ENCODE measurements at regions of chr15 and their contacts with region 1.

Region 1: DNA sequence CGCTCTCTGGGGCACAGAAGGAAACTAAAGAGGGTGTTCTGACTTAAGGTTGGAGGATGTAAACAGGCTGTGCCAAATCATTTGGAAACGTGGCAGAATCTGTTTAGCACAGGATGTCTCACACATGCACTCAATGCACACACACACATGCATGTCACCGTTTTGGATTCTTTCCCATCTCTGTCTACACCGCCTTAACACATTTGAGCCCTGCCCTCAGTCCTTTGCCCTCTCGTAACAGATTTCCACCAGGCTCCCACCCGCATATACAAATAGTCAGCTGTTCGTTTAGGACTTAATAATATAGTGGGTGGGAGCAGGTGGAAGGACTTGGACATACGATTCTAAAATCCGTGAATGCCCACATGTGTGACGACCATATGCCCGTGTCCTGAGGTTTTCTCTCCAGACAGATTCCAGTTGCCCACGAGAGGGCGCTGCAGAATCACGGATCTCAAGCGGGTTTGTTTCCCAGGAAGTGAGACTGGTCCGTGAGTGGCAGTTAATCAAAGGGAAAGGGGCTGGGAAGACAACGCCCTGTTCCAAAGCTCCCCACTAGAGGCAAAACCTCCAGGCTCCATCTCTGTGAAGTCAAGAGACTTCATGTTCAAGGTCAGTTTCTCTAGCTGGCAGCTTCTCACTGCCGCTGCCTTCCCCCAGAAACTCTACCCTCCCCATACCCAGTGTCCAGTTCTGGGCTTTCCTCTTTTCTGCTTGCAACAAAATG is 44.5 kb downstream of the NOX5 start:
- DNase-seq: peak; percentile 85 to 97 (median 92)
- H3K4me3 ChIP-seq: no peak overlapping the region
- H3K27ac ChIP-seq: no peak overlapping the region
- H3K4me1 ChIP-seq: peaks cover 0 to 8% of the 10 kb centered on the region in 2 donors
- H3K27me3 ChIP-seq: no peaks in the 10 kb centered on the region
- CTCF ChIP-seq: peak; percentile 83 to 98 (median 94)
- POLR2A ChIP-seq: no peak

Region 2: GRCh38 chr15:69225355-69226025 is 166.5 kb after region 1 on chr15:
- intact Hi-C with region 1: loop called in 1 of 2 experiments (anchors 10 kb)
- DNase-seq: no peak
- H3K4me3 ChIP-seq: no peak overlapping the region
- H3K27ac ChIP-seq: no peak overlapping the region
- H3K4me1 ChIP-seq: no peaks in the 10 kb centered on the region
- H3K27me3 ChIP-seq: no peaks in the 10 kb centered on the region
- CTCF ChIP-seq: peak in 5 of 6 experiments; percentile 26 to 52 (median 40)
- POLR2A ChIP-seq: no peak

Region 3: GRCh38 chr15:69265347-69265955 is 206.5 kb after region 1 on chr15:
- intact Hi-C with region 1: loop called in 1 of 2 experiments (anchors 10 kb)
- DNase-seq: no peak
- H3K4me3 ChIP-seq: no peak overlapping the region
- H3K27ac ChIP-seq: no peak overlapping the region
- H3K4me1 ChIP-seq: no peaks in the 10 kb centered on the region
- H3K27me3 ChIP-seq: no peaks in the 10 kb centered on the region
- CTCF ChIP-seq: peak; percentile 34 to 71 (median 54)
- POLR2A ChIP-seq: no peak

Region 4: DNA sequence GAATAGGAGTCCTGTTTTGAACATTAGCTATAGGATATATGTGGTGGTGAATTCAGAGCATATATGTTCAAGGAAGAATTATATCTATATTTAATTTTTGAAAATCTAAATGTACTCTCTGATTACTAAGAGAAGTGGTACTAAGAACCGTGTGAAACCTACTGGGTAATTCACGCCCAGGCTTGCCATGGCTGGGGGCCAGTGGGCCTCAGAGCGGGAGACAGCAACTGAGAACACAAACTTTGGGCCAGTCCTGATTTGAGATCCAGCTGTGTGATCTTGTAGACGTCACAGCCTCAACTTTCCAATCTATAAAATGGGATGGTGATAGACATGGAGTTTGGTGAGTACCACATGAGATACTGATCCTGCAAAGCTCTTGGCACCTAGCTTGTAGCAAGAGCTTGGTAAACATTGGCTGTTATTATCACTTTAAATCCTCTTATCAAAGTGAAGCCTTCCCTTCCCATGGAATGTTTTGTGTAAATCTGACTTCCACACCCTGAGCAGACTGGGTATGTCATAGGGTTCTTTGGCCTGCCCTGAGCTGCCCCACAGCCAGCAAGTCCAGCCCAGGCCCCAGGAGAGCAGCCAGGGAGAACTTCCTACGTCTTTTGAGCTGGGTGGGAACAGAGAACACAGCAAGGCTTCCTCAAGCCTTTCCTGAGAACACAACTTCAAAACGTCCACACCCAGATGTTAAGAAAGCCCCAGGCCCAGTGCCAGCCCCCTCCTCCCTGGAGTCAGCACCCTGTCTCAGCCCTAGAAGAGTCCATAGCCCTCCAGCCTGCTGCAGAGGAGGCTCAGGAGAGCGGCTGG is 231.6 kb after region 1 on chr15:
- intact Hi-C with region 1: no loop called
- DNase-seq: peak in 3 of 7 donors; percentile 15 to 61 (median 48)
- H3K4me3 ChIP-seq: no peak overlapping the region
- H3K27ac ChIP-seq: peak overlapping the region in 2 of 5 donors; percentile 6 to 66
- H3K4me1 ChIP-seq: peaks cover 0 to 5% of the 10 kb centered on the region in 2 donors
- H3K27me3 ChIP-seq: no peaks in the 10 kb centered on the region
- CTCF ChIP-seq: no peak
- POLR2A ChIP-seq: no peak

Region 5: GRCh38 chr15:69394556-69395282 is 335.7 kb after region 1 on chr15:
- intact Hi-C with region 1: loop called (anchors 5 kb)
- DNase-seq: peak; percentile 69 to 92 (median 85)
- H3K4me3 ChIP-seq: no peak overlapping the region
- H3K27ac ChIP-seq: peak overlapping the region in 1 of 5 donors; percentile 50
- H3K4me1 ChIP-seq: peaks cover 0 to 8% of the 10 kb centered on the region in 2 donors
- H3K27me3 ChIP-seq: no peaks in the 10 kb centered on the region
- CTCF ChIP-seq: peak; percentile 89 to 98 (median 93)
- POLR2A ChIP-seq: no peak

Region 6: GRCh38 chr15:69468241-69469121 is 409.5 kb after region 1 on chr15:
- intact Hi-C with region 1: loop called in 1 of 2 experiments (anchors 5 kb)
- DNase-seq: peak in 4 of 7 donors; percentile 14 to 75 (median 26)
- H3K4me3 ChIP-seq: no peak overlapping the region
- H3K27ac ChIP-seq: no peak overlapping the region
- H3K4me1 ChIP-seq: peaks cover 0 to 3% of the 10 kb centered on the region in 2 donors
- H3K27me3 ChIP-seq: no peaks in the 10 kb centered on the region
- CTCF ChIP-seq: no peak
- POLR2A ChIP-seq: no peak

Region 7: GRCh38 chr15:69666411-69666882 is 607.5 kb after region 1 on chr15:
- intact Hi-C with region 1: no loop called
- DNase-seq: peak in 6 of 7 donors; percentile 27 to 62 (median 32)
- H3K4me3 ChIP-seq: no peak overlapping the region
- H3K27ac ChIP-seq: peak overlapping the region in 1 of 5 donors; percentile 51
- H3K4me1 ChIP-seq: peaks cover 0 to 5% of the 10 kb centered on the region in 2 donors
- H3K27me3 ChIP-seq: no peaks in the 10 kb centered on the region
- CTCF ChIP-seq: no peak
- POLR2A ChIP-seq: no peak